CD4-positive, alpha-beta memory T cell (primary cell): ENCODE measurements at regions of chr18 and their contacts with region 1.

Region 1: DNA sequence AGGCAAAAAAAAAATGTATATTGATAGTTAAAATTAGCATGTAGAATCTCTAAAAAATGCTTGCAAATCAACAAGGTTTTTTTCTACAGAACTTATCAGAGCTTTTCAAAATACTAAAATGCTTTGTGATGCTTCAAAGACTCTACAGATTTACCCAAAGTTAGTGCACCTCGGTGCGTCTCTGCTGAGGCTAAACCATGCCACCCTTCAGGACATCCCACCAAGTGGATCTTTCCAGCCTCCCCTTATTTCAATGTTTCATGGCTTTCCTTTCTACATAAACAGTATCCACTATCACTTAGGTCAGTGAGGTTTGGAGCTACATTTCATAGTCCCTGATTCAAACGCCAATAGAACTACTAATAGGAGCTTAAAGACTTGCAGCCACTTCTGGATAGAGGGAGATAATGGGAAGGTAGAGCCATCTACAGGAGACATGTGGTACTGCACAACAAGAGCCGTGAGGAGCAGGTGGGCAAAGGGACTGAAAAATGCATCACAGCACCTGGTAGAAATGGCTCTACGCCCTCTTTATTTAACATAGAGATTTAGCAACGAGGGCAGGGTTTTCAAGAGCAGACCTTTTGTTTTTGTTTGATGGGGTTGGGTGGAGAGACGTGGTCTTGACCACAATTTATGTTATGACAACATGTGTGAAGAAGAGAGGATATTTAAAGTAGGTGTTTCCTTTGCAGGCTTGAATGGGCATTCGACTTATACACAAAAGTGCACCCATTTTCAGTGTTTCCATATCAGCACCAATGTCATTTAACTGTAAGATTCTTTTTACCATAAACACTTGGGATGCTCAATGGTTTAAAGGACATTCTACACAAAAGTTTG is 56.1 kb upstream of the SLC35G4 start:
- DNase-seq: peak in 4 of 5 donors; percentile 30 to 40 (median 39)
- H3K4me3 ChIP-seq: no peak overlapping the region
- H3K4me3 Mint-ChIP-seq: no peak overlapping the region
- H3K27ac ChIP-seq: no peak overlapping the region
- H3K27ac Mint-ChIP-seq: no peak overlapping the region
- H3K4me1 ChIP-seq: no peaks in the 10 kb centered on the region
- H3K4me1 Mint-ChIP-seq: peaks cover 3 to 11% (median 5%) of the 10 kb centered on the region in 4 donors
- H3K27me3 ChIP-seq: no peaks in the 10 kb centered on the region
- H3K27me3 Mint-ChIP-seq: peaks cover 3 to 5% of the 10 kb centered on the region in 2 donors

Region 2: DNA sequence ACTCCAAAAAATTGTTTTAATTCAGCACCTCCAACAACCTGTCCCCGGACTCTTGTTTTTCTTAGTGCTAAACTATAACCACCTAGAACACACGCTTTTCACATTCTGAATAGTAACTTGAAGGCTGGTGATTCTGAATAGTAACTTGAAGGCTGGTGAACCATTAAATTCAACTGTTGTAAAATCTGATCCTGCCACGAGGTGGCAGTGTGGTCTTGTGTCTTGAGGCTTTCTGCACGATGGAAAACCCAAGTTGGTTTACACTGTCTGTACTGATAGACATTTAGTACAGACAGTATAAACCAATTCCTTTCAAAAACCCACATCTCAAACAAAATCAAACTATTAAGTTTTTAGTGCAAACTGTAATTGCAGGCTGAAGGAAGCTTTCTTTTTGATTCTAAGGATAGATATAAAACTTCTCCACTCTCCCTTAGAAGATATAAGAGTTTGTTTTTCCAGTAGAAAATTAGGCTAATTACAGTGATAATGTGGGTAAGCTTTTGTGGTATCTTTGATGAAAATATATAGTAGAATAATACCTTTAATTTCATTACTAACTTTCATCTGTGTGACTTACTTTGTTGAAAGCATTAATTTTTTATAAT is 1581.9 kb before region 1 on chr18:
- CTCF ChIA-PET with region 1: no interaction called
- POLR2A ChIA-PET with region 1: no interaction called
- intact Hi-C with region 1: loop called (anchors 1 kb)
- DNase-seq: peak; percentile 49 to 59 (median 57)
- H3K4me3 ChIP-seq: no peak overlapping the region
- H3K4me3 Mint-ChIP-seq: no peak overlapping the region
- H3K27ac ChIP-seq: no peak overlapping the region
- H3K27ac Mint-ChIP-seq: no peak overlapping the region
- H3K4me1 ChIP-seq: peaks cover 1% of the 10 kb centered on the region
- H3K4me1 Mint-ChIP-seq: peaks cover 7 to 29% (median 11%) of the 10 kb centered on the region in 4 donors
- H3K27me3 ChIP-seq: no peaks in the 10 kb centered on the region
- H3K27me3 Mint-ChIP-seq: peaks cover 27 to 28% of the 10 kb centered on the region in 2 donors

Region 3: DNA sequence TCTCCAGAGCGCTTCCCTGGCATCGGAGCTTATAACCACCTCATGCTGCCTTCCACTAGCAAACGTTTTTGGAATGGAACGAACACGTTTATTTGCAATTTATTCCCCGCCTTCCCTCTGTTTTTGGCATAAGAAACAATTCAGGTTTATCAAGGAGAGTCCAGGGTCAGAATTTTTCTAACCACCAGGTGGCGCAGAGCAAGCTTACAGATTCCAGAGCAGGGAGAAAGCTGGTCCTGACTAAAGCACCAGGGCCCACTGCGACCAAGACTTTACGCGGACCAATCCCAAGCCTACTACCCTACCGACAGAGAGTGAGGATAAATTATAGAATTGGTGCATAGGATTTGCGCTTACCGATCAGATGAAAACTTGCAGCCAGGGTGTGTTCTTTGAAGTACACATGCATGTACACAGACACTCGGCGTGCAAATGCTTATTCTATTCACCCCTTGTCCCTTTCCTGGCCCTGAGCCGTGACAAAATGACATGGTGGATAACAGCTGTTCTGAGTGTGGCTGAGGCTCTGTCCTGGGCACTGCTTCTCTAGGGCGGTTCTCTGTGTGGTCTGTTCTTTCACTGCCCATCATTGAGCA is 992.8 kb before region 1 on chr18:
- CTCF ChIA-PET with region 1: interaction called, 12 read pairs
- POLR2A ChIA-PET with region 1: no interaction called
- intact Hi-C with region 1: no loop called
- DNase-seq: peak in 4 of 5 donors; percentile 34 to 54 (median 44)
- H3K4me3 ChIP-seq: no peak overlapping the region
- H3K4me3 Mint-ChIP-seq: peak overlapping the region in 3 of 8 donors; percentile 6 to 61 (median 46)
- H3K27ac ChIP-seq: no peak overlapping the region
- H3K27ac Mint-ChIP-seq: no peak overlapping the region
- H3K4me1 ChIP-seq: peaks cover 5% of the 10 kb centered on the region
- H3K4me1 Mint-ChIP-seq: peaks cover 5 to 16% (median 12%) of the 10 kb centered on the region in 4 donors
- H3K27me3 ChIP-seq: no peaks in the 10 kb centered on the region
- H3K27me3 Mint-ChIP-seq: no peaks in the 10 kb centered on the region

Region 4: DNA sequence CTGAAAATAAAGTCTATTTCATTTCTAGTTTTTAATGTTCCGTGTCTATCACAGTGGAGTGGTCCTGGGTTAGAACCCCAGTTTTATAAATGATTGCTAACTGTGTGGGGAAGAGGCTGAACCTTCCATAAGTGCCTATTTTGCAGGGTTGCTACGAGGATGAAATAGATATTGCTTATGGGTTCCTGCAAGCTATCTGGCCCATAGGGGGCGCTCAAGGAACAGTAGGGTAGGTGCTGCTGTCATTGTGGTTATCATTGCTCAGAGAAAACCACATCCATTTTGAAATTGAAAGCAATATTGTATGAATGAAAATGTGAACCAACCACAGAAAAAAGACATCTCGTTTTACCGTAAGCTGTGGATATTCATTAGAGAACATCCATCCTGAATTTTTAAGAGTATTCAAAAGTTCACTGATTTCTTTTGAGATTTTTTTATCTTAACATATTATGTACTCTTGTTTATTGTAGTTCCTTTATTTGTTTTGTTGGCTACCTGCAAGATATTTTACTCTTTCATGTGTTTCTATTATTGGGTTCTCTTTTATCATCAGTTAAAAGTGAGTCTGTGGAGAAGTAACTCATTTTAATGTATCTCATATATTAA is 765.9 kb before region 1 on chr18:
- CTCF ChIA-PET with region 1: interaction called, 6 read pairs
- POLR2A ChIA-PET with region 1: no interaction called
- intact Hi-C with region 1: loop called (anchors 5 kb)
- DNase-seq: peak; percentile 73 to 81 (median 75)
- H3K4me3 ChIP-seq: no peak overlapping the region
- H3K4me3 Mint-ChIP-seq: peak overlapping the region in 2 of 8 donors; percentile 28 to 35
- H3K27ac ChIP-seq: no peak overlapping the region
- H3K27ac Mint-ChIP-seq: peak overlapping the region in 4 of 7 donors; percentile 42 to 60 (median 47)
- H3K4me1 ChIP-seq: no peaks in the 10 kb centered on the region
- H3K4me1 Mint-ChIP-seq: peaks cover 2 to 5% (median 5%) of the 10 kb centered on the region in 4 donors
- H3K27me3 ChIP-seq: no peaks in the 10 kb centered on the region
- H3K27me3 Mint-ChIP-seq: peaks cover 2 to 3% of the 10 kb centered on the region in 2 donors

Region 5: GRCh38 chr18:11541202-11541601 is 12.1 kb before region 1 on chr18:
- CTCF ChIA-PET with region 1: interaction called, 14 read pairs
- POLR2A ChIA-PET with region 1: no interaction called
- intact Hi-C with region 1: no loop called
- DNase-seq: no peak
- H3K4me3 ChIP-seq: no peak overlapping the region
- H3K4me3 Mint-ChIP-seq: no peak overlapping the region
- H3K27ac ChIP-seq: no peak overlapping the region
- H3K27ac Mint-ChIP-seq: no peak overlapping the region
- H3K4me1 ChIP-seq: no peaks in the 10 kb centered on the region
- H3K4me1 Mint-ChIP-seq: no peaks in the 10 kb centered on the region
- H3K27me3 ChIP-seq: no peaks in the 10 kb centered on the region
- H3K27me3 Mint-ChIP-seq: no peaks in the 10 kb centered on the region